H1 (cell line): ENCODE measurements at regions of chr5 and their contacts with region 1.

Region 1: DNA sequence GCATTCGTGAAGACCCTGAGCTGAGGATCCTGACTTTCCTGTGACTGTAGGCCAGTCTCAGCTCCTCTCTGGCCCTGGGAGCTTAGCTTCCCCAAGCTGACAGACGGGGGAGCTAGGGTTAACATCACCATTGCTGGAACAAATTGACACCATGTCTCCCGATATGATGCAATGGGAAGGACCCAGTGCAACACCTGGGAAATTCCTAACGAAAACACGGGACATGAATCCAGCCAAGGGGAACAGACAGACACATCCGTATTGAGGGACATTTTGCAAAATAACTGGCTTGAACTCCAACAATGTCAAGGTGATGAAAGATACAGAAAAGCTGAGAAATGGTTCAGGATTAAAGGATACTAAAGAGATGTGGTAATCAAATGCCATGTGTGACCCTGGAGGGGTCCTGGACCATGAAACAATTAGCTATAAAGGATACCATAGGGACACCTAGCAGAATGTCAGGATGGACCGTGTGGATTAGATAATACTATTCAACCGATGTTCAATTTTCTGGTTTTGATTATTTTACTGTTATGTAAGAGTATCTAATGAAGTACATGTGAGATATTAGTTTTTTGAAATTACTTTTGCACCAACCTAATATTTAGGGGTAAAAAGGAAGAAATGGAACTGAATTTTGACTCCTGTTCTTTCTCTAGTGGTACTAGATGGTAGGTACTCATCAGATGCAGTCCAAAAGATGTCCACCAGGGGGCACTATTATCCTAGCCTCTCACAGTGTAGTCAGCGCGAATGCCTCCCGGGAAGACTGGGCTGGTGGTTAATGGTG is 52.7 kb downstream of the NDST1 start:
- DNase-seq: peak; percentile 56 to 96
- H3K4me3 ChIP-seq: peak overlapping the region in 1 of 4 experiments; percentile 23; a peak in 1 of 8 replicates
- H3K27ac ChIP-seq: 0 out of 2 replicates have a peak overlapping the region, but pooled peaks have one; percentile 2
- H3K4me1 ChIP-seq: peaks cover 2 to 9% (median 4%) of the 10 kb centered on the region in 4 experiments
- H3K27me3 ChIP-seq: no peaks in the 10 kb centered on the region
- CTCF ChIP-seq: peak; percentile 50 to 91 (median 82)
- EP300 ChIP-seq: peak in 1 of 2 experiments; percentile 20; a peak in 1 of 3 replicates
- POLR2A ChIP-seq: no peak
- RAD21 ChIP-seq: peak; percentile 93 to 94

Region 2: GRCh38 chr5:150320048-150320555 is 240.5 kb before region 1 on chr5:
- CTCF ChIA-PET with region 1: no interaction called
- POLR2A ChIA-PET with region 1: no interaction called
- DNase-seq: no peak
- H3K4me3 ChIP-seq: no peak overlapping the region
- H3K27ac ChIP-seq: no peak overlapping the region
- H3K4me1 ChIP-seq: peaks cover 0 to 6% (median 1%) of the 10 kb centered on the region in 4 experiments; a peak in 4 of 7 replicates
- H3K27me3 ChIP-seq: no peaks in the 10 kb centered on the region
- CTCF ChIP-seq: no peak
- EP300 ChIP-seq: no peak
- POLR2A ChIP-seq: no peak
- RAD21 ChIP-seq: no peak

Region 3: DNA sequence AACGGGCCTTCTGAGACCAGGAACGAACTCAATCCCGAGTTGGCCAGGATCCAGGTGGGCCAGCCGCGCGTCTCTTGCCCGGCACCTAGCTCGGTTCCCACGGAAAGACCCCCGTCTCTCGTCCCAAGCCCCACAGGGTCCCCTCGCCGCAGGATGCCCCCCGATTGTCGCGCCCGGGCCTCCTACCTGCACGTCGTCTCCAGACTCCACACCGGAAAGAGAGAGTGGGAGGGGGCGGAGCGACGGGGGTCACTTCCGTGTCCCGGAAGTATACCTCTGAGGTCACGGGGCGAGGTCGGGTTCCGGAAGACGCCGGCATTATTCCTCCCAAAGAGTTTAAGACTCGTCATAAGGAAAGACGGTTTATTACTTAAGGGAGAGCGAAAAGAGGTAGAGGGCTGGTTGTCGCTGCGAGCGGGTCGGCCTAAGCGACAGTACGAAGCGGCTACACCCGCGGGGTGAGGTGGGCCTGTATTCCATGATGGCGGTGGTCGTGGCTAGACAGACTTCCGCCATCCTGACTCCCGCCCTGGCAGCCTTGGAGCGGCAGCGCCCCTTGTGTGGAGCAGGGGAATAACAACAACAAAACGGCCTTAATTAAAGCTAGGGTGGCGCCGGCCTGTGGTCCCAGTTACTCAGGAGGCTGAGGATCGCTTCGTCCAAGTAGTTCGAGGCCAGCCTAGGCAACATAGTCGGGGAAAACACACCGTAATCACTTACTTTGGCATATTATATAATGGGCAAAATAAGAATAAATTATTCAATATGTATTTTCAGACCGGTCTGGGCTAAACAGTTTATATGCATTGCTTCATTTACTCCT is 110.9 kb before region 1 on chr5 and contains the start of gene RPS14:
- CTCF ChIA-PET with region 1: interaction called, 7 read pairs
- POLR2A ChIA-PET with region 1: interaction called, 20 read pairs
- DNase-seq: peak; percentile 77 to 96
- H3K4me3 ChIP-seq: peak within 1 kb of the TSS; percentile 97 to 100 (median 98)
- H3K27ac ChIP-seq: peak within 1 kb of the TSS; percentile 99
- H3K4me1 ChIP-seq: peaks cover 0 to 15% (median 8%) of the 10 kb centered on the region in 4 experiments; a peak in 6 of 7 replicates
- H3K27me3 ChIP-seq: no peaks in the 10 kb centered on the region
- CTCF ChIP-seq: peak; percentile 78 to 93 (median 85)
- EP300 ChIP-seq: peak in 1 of 2 experiments; percentile 21; a peak in 1 of 3 replicates
- POLR2A ChIP-seq: peak; percentile 90 to 98
- RAD21 ChIP-seq: peak; percentile 33 to 46; a peak in 3 of 4 replicates
- total RNA-seq, gene RPS14: 2,548 and 2,599 TPM in 2 replicates

Region 4: GRCh38 chr5:150497274-150497988 is 63.2 kb before region 1 on chr5:
- CTCF ChIA-PET with region 1: interaction called, 16 read pairs
- POLR2A ChIA-PET with region 1: no interaction called
- DNase-seq: no peak
- H3K4me3 ChIP-seq: no peak overlapping the region
- H3K27ac ChIP-seq: peak overlapping the region; percentile 25; the same call in 1 of the 2 replicates
- H3K4me1 ChIP-seq: peaks cover 21 to 28% (median 27%) of the 10 kb centered on the region in 4 experiments
- H3K27me3 ChIP-seq: no peaks in the 10 kb centered on the region
- CTCF ChIP-seq: no peak
- EP300 ChIP-seq: no peak
- POLR2A ChIP-seq: no peak
- RAD21 ChIP-seq: no peak

Region 5: GRCh38 chr5:150582241-150583109 is 21.9 kb after region 1 on chr5:
- CTCF ChIA-PET with region 1: interaction called, 98 read pairs
- POLR2A ChIA-PET with region 1: no interaction called
- DNase-seq: no peak
- H3K4me3 ChIP-seq: no peak overlapping the region
- H3K27ac ChIP-seq: no peak overlapping the region
- H3K4me1 ChIP-seq: peaks cover 0 to 2% (median 0%) of the 10 kb centered on the region in 4 experiments; a peak in 1 of 7 replicates
- H3K27me3 ChIP-seq: no peaks in the 10 kb centered on the region
- CTCF ChIP-seq: no peak
- EP300 ChIP-seq: no peak
- POLR2A ChIP-seq: no peak
- RAD21 ChIP-seq: no peak

Region 6: GRCh38 chr5:150640311-150641005 is 79.9 kb after region 1 on chr5 and contains the start of gene SYNPO:
- CTCF ChIA-PET with region 1: interaction called, 32 read pairs
- POLR2A ChIA-PET with region 1: interaction called, 7 read pairs
- DNase-seq: no peak
- H3K4me3 ChIP-seq: no peak within 1 kb of the TSS
- H3K27ac ChIP-seq: no peak within 1 kb of the TSS
- H3K4me1 ChIP-seq: peaks cover 0 to 26% (median 15%) of the 10 kb centered on the region in 4 experiments; a peak in 6 of 7 replicates
- H3K27me3 ChIP-seq: no peaks in the 10 kb centered on the region
- CTCF ChIP-seq: no peak
- EP300 ChIP-seq: no peak
- POLR2A ChIP-seq: no peak
- RAD21 ChIP-seq: no peak
- total RNA-seq, gene SYNPO: 1.9 and 2.3 TPM in 2 replicates

Region 7: DNA sequence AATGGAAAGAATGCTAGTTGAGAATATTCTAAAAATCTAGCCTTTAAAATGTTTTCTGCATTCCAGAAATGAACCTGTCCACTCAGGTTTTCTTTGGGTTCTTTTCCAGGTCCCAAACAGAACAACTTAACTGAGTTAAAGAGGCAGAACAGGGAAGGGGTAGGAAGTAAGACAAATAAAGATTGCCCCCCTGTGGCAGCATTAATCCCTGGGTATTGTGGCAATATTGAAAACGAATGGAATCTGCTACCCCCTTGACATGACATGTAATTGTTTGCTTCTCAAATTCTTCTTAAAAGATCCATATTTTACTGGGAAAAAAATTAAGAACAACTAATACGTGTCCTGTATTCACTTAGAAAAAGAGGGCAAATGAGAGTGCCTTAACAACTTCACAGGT is 149.6 kb after region 1 on chr5:
- CTCF ChIA-PET with region 1: interaction called, 25 read pairs
- POLR2A ChIA-PET with region 1: no interaction called
- DNase-seq: no peak
- H3K4me3 ChIP-seq: no peak overlapping the region
- H3K27ac ChIP-seq: no peak overlapping the region
- H3K4me1 ChIP-seq: peaks cover 0 to 2% (median 0%) of the 10 kb centered on the region in 4 experiments; a peak in 1 of 7 replicates
- H3K27me3 ChIP-seq: no peaks in the 10 kb centered on the region; a peak in 1 of 7 replicates
- CTCF ChIP-seq: peak in 1 of 3 experiments; percentile 23; a peak in 2 of 4 replicates
- EP300 ChIP-seq: no peak
- POLR2A ChIP-seq: no peak
- RAD21 ChIP-seq: peak; percentile 48 to 58